Activated CD8-positive, alpha-beta T cell treated with anti-CD3 and anti-CD28 coated beads for 36 hours (primary cell): ENCODE measurements at regions of chr4 and their contacts with region 1.

Region 1: GRCh38 chr4:42656944-42657792 is at the start of gene ATP8A1:
- DNase-seq: peak; percentile 93
- ATAC-seq: peak; percentile 93
- H3K4me3 Mint-ChIP-seq: peak within 1 kb of the TSS; percentile 93
- H3K27ac Mint-ChIP-seq: peak within 1 kb of the TSS; percentile 99
- H3K4me1 Mint-ChIP-seq: peaks cover 41% of the 10 kb centered on the region
- H3K27me3 Mint-ChIP-seq: no peaks in the 10 kb centered on the region
- CTCF ChIP-seq: no peak
- total RNA-seq, gene ATP8A1: 28.1 to 30.7 TPM

Region 2: GRCh38 chr4:42519803-42520417 is 137.3 kb before region 1 on chr4:
- CTCF ChIA-PET with region 1: no interaction called
- POLR2A ChIA-PET with region 1: no interaction called
- intact Hi-C with region 1: no loop called
- DNase-seq: peak; percentile 68
- ATAC-seq: peak; percentile 70
- H3K4me3 Mint-ChIP-seq: no peak overlapping the region
- H3K27ac Mint-ChIP-seq: no peak overlapping the region
- H3K4me1 Mint-ChIP-seq: peaks cover 8% of the 10 kb centered on the region
- H3K27me3 Mint-ChIP-seq: no peaks in the 10 kb centered on the region
- CTCF ChIP-seq: peak; percentile 78

Region 3: DNA sequence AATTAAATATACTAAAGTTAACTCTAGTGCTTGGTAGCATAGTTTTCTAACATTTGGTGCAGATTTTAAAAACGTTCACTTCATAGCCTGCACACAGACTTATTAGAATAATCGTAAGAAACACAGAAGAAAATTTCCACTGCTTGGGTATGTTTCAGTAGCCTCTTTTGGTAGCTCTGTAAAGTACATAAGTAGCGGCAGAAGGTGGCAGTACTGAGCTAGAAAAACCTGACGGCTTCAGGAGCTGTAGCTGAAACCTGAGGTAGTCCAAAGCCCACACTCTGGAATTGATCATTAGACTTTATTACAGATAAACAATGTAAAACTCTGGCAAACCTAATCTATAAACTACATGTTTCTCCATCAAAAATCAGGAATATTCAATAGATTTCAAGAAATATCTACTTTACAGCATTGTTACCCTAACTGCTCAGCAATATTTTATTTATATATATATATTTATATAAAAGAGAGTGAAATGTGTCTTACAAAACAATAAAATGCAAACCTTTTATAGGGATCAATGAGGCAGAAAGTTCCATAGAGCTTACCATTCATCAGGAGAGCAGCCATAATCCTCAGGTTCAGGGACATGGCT is 88.5 kb before region 1 on chr4:
- CTCF ChIA-PET with region 1: interaction called, 19 read pairs
- POLR2A ChIA-PET with region 1: no interaction called
- intact Hi-C with region 1: no loop called
- DNase-seq: peak; percentile 79
- ATAC-seq: peak; percentile 92
- H3K4me3 Mint-ChIP-seq: no peak overlapping the region
- H3K27ac Mint-ChIP-seq: no peak overlapping the region
- H3K4me1 Mint-ChIP-seq: no peaks in the 10 kb centered on the region
- H3K27me3 Mint-ChIP-seq: no peaks in the 10 kb centered on the region
- CTCF ChIP-seq: peak; percentile 84

Region 4: GRCh38 chr4:42627885-42628646 is 29.1 kb before region 1 on chr4:
- CTCF ChIA-PET with region 1: interaction called, 4 read pairs
- POLR2A ChIA-PET with region 1: interaction called, 9 read pairs
- intact Hi-C with region 1: loop called (anchors 1 kb)
- DNase-seq: peak; percentile 73
- ATAC-seq: peak; percentile 87
- H3K4me3 Mint-ChIP-seq: peak overlapping the region; percentile 65
- H3K27ac Mint-ChIP-seq: peak overlapping the region; percentile 92
- H3K4me1 Mint-ChIP-seq: peaks cover 64% of the 10 kb centered on the region
- H3K27me3 Mint-ChIP-seq: no peaks in the 10 kb centered on the region
- CTCF ChIP-seq: no peak

Region 5: DNA sequence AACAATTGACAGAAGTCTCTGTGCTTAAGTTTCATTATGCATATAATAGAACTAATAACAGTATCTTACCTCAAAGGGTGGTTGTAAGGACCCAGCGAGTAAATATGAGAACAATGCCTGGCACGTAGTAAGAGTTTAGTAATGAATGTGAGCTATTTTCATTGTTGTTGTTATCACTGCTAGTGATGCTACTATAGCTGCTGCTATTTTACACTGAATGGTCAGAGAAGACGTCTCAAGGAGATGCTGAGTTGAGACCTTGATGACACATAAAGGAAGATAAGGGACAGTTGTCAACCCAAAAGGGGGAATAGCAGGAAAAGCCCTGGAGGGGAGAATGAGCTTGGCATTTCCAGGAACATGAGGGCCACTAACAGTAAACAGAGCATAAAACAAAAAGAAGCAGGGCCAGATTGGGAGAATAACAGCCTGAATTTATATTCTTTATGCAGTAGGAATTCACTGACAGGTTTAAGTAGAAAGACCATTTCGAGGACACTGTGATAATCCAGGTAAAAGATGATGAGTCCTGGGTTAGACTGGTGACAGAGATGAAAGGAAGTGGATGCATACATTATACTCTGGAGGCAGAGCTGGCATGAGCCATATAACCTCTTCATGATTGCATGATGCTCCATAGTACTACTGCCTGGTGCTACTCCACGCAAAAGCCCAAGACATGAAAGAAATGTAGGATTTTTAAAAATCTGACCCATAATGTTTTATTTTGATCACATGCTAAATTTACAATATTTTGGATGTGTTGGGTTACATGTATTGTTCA is 23.4 kb before region 1 on chr4:
- CTCF ChIA-PET with region 1: interaction called, 4 read pairs
- POLR2A ChIA-PET with region 1: interaction called, 10 read pairs
- intact Hi-C with region 1: loop called (anchors 1 kb)
- DNase-seq: no peak
- ATAC-seq: peak; percentile 54
- H3K4me3 Mint-ChIP-seq: no peak overlapping the region
- H3K27ac Mint-ChIP-seq: peak overlapping the region; percentile 14
- H3K4me1 Mint-ChIP-seq: peaks cover 77% of the 10 kb centered on the region
- H3K27me3 Mint-ChIP-seq: no peaks in the 10 kb centered on the region
- CTCF ChIP-seq: no peak

Region 6: DNA sequence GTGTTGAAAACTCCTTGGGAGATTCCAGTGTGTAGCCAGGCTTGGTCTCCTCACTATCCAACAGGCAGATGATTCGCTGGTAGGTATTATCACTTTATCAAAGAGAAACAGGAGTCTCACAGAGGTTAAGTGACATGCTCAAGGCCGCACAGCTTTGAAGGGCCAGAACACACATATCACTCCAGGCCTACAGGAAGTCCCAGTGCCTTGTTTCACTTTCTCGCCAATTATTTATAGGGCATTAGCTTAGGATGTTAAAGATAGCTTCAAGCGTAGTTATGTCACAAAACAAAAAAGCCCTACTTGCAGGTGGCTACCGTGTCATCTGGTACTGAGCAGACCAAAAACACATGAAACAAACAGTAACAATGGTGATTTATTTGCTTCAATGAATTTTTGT is 13.5 kb before region 1 on chr4:
- CTCF ChIA-PET with region 1: interaction called, 27 read pairs
- POLR2A ChIA-PET with region 1: interaction called, 23 read pairs
- intact Hi-C with region 1: no loop called
- DNase-seq: no peak
- ATAC-seq: peak; percentile 18
- H3K4me3 Mint-ChIP-seq: peak overlapping the region; percentile 13
- H3K27ac Mint-ChIP-seq: peak overlapping the region; percentile 44
- H3K4me1 Mint-ChIP-seq: peaks cover 86% of the 10 kb centered on the region
- H3K27me3 Mint-ChIP-seq: no peaks in the 10 kb centered on the region
- CTCF ChIP-seq: no peak

Region 7: GRCh38 chr4:42673082-42673425 is 15.9 kb after region 1 on chr4:
- CTCF ChIA-PET with region 1: interaction called, 10 read pairs
- POLR2A ChIA-PET with region 1: interaction called, 19 read pairs
- intact Hi-C with region 1: loop called (anchors 2 kb)
- DNase-seq: peak; percentile 67
- ATAC-seq: peak; percentile 67
- H3K4me3 Mint-ChIP-seq: peak overlapping the region; percentile 50
- H3K27ac Mint-ChIP-seq: peak overlapping the region; percentile 95
- H3K4me1 Mint-ChIP-seq: peaks cover 70% of the 10 kb centered on the region
- H3K27me3 Mint-ChIP-seq: no peaks in the 10 kb centered on the region
- CTCF ChIP-seq: no peak

Region 8: GRCh38 chr4:42678512-42678911 is 21.3 kb after region 1 on chr4:
- CTCF ChIA-PET with region 1: interaction called, 5 read pairs
- POLR2A ChIA-PET with region 1: interaction called, 19 read pairs
- intact Hi-C with region 1: loop called (anchors 2 kb)
- DNase-seq: no peak
- ATAC-seq: no peak
- H3K4me3 Mint-ChIP-seq: no peak overlapping the region
- H3K27ac Mint-ChIP-seq: no peak overlapping the region
- H3K4me1 Mint-ChIP-seq: peaks cover 47% of the 10 kb centered on the region
- H3K27me3 Mint-ChIP-seq: no peaks in the 10 kb centered on the region
- CTCF ChIP-seq: no peak